Left cardiac atrium (tissue), 4 donors: ENCODE measurements at regions of chr3 and their contacts with region 1.

Region 1: GRCh38 chr3:50121416-50122032 is 32.8 kb downstream of the RBM5 start:
- DNase-seq: peak; percentile 81
- ATAC-seq: peak; percentile 83 to 89

Region 2: GRCh38 chr3:50015918-50016317 is 105.6 kb before region 1 on chr3:
- intact Hi-C with region 1: no loop called
- DNase-seq: no peak
- ATAC-seq: no peak

Region 3: DNA sequence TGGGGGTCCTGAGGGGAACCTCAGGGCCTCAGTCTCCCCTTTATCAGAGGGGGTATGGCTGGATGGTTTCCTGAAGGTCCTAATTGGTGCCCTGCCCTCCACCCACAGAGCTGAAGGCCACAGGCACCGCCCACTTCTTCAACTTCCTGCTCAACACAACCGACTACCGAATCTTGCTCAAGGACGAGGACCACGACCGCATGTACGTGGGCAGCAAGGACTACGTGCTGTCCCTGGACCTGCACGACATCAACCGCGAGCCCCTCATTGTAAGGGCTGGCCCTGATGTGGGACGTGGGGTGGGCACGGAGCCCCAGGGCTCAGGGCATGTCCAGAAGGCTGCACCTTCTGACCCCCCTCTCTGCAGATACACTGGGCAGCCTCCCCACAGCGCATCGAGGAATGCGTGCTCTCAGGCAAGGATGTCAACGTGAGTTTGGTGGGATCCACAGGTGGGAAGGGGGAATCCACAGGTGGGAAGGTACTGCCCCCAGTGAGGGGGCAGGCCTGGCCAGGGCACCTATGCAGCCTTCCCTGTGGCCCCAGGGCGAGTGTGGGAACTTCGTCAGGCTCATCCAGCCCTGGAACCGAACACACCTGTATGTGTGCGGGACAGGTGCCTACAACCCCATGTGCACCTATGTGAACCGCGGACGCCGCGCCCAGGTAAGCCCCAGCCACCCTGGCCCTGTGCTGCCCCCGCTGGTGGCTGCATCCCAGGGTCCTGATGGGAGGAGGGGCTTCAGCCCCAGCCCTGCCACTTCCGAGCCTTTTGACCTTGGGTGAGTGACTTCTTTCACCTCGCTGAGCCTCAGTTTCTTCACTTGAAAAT is 52.4 kb after region 1 on chr3:
- intact Hi-C with region 1: no loop called
- DNase-seq: no peak
- ATAC-seq: no peak

Region 4: GRCh38 chr3:50192689-50193141 is 71.2 kb after region 1 on chr3:
- intact Hi-C with region 1: loop called (anchors 2 kb)
- DNase-seq: peak; percentile 65
- ATAC-seq: peak in 1 of 2 donors; percentile 35

Region 5: GRCh38 chr3:50203113-50203852 is 81.8 kb after region 1 on chr3:
- intact Hi-C with region 1: no loop called
- DNase-seq: peak; percentile 10
- ATAC-seq: no peak